Ovary (tissue), 10 donors: ENCODE measurements at regions of chr9 and their contacts with region 1.

Region 1: DNA sequence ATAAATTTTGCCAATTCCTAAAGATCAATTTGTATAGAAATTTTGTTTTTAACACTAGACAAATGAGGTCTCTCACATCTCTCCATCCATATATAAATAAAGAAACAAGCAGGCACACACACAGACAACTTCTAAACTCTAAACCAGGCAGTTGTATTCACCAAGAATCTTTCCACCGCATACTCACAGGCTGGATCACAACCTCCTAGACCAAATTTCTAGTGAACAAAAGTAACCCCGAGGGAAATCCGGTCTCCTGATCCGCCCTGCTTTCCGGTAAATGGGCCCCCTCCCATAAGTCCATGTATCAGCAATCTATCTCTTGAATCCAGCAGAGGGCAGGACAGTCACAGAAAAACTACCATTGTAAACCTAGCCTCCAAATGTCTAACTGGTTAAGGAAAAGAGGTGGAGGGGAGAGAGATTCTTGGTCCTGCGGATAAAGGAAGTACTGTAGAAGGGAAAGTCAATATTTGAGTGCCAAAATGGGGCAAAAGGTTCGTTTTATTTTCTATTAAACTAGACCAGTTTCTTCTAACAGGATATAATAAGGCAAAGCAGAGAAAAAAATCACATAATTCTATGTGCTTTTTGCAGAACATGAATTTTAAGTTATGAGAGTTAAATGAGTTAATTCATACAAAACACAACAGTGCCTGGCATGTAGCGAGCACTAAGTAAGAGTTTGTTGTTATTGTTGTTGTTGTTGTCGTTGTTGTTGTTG is 4.8 kb upstream of the SMU1 start:
- DNase-seq: peak in 4 of 5 donors; percentile 47 to 75 (median 51)
- H3K4me3 ChIP-seq: no peak overlapping the region
- H3K27ac ChIP-seq: peak overlapping the region in 1 of 2 donors; percentile 44
- H3K4me1 ChIP-seq: no peaks in the 10 kb centered on the region
- H3K27me3 ChIP-seq: no peaks in the 10 kb centered on the region
- CTCF ChIP-seq: peak; percentile 61 to 92 (median 87)
- EP300 ChIP-seq: no peak
- POLR2A ChIP-seq: no peak

Region 2: GRCh38 chr9:33044127-33044673 is 37.1 kb before region 1 on chr9:
- intact Hi-C with region 1: no loop called
- DNase-seq: peak; percentile 73 to 87 (median 80)
- H3K4me3 ChIP-seq: peak overlapping the region; percentile 45
- H3K27ac ChIP-seq: peak overlapping the region; percentile 74 to 81
- H3K4me1 ChIP-seq: peaks cover 3% of the 10 kb centered on the region
- H3K27me3 ChIP-seq: no peaks in the 10 kb centered on the region
- CTCF ChIP-seq: no peak
- EP300 ChIP-seq: peak; percentile 52
- POLR2A ChIP-seq: peak; percentile 29

Region 3: GRCh38 chr9:33225319-33226149 is 144.2 kb after region 1 on chr9:
- intact Hi-C with region 1: loop called (anchors 1 to 2 kb)
- DNase-seq: peak in 4 of 5 donors; percentile 45 to 81 (median 64)
- H3K4me3 ChIP-seq: no peak overlapping the region
- H3K27ac ChIP-seq: no peak overlapping the region
- H3K4me1 ChIP-seq: peaks cover 3% of the 10 kb centered on the region
- H3K27me3 ChIP-seq: no peaks in the 10 kb centered on the region
- CTCF ChIP-seq: peak; percentile 62 to 96 (median 90)
- EP300 ChIP-seq: no peak
- POLR2A ChIP-seq: peak; percentile 5

Region 4: GRCh38 chr9:33239921-33240320 is 158.6 kb after region 1 on chr9 and contains the start of gene SPINK4:
- intact Hi-C with region 1: no loop called
- DNase-seq: no peak
- H3K4me3 ChIP-seq: no peak within 1 kb of the TSS
- H3K27ac ChIP-seq: no peak within 1 kb of the TSS
- H3K4me1 ChIP-seq: no peaks in the 10 kb centered on the region
- H3K27me3 ChIP-seq: no peaks in the 10 kb centered on the region
- CTCF ChIP-seq: no peak
- EP300 ChIP-seq: no peak
- POLR2A ChIP-seq: no peak
- total RNA-seq, gene SPINK4: not detected